HepG2 (cell line): ENCODE measurements at regions of chr9 and their contacts with region 1.

Region 1: DNA sequence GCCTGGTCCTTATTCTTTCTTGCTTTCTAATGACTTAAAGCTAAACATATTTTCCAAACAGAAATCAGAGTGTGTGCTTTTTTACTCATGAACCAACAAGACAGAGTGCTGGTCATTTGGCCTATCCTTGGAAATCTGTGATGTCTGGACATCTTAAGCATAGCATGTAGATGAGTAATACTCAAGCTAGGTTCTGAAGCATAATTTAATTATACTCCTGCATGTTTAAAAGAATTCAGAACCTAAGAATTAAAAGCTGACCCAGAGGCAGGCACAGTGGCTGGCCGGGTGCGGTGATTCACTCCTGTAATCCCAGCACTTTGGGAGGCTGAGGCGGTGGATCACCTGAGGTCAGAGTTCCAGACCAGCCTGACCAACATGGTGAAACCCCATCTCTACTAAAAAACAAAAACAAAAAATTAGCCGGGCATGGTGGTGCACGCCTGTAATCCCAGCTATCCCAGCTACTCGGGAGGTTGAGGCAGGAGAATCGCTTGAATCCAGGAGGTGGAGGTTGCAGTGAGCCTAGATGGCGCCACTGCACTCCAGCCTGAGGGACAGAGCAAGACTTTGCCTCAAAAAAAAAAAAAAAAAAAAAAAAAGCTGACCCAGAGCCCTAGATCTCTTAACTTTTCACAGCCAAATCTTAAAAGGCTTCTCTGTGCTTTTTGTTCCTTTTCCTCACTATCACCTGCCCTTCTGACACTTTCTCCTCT is 16.2 kb upstream of the TJP2 start:
- DNase-seq: no peak
- ATAC-seq: no peak
- H3K4me3 ChIP-seq: no peak overlapping the region
- H3K27ac ChIP-seq: no peak overlapping the region
- H3K4me1 ChIP-seq: peaks cover 30% of the 10 kb centered on the region
- H3K27me3 ChIP-seq: no peaks in the 10 kb centered on the region
- CTCF ChIP-seq: peak; percentile 55
- EP300 ChIP-seq: no peak
- POLR2A ChIP-seq: no peak
- RAD21 ChIP-seq: no peak

Region 2: GRCh38 chr9:69097064-69097463 is 60.8 kb before region 1 on chr9:
- CTCF ChIA-PET with region 1: no interaction called
- POLR2A ChIA-PET with region 1: no interaction called
- in situ Hi-C with region 1: no loop called
- intact Hi-C with region 1: no loop called
- DNase-seq: no peak
- ATAC-seq: no peak
- H3K4me3 ChIP-seq: no peak overlapping the region
- H3K27ac ChIP-seq: no peak overlapping the region
- H3K4me1 ChIP-seq: peaks cover 25% of the 10 kb centered on the region
- H3K27me3 ChIP-seq: no peaks in the 10 kb centered on the region
- CTCF ChIP-seq: no peak
- EP300 ChIP-seq: no peak
- POLR2A ChIP-seq: no peak
- RAD21 ChIP-seq: no peak

Region 3: GRCh38 chr9:69131682-69132081 is 26.2 kb before region 1 on chr9:
- CTCF ChIA-PET with region 1: no interaction called
- POLR2A ChIA-PET with region 1: interaction called, 10 read pairs
- in situ Hi-C with region 1: no loop called
- intact Hi-C with region 1: no loop called
- DNase-seq: peak; percentile 93
- ATAC-seq: peak; percentile 97
- H3K4me3 ChIP-seq: peak overlapping the region in 1 of 3 experiments; percentile 45; a peak in 1 of 6 replicates
- H3K27ac ChIP-seq: peak overlapping the region; percentile 70
- H3K4me1 ChIP-seq: peaks cover 63% of the 10 kb centered on the region
- H3K27me3 ChIP-seq: no peaks in the 10 kb centered on the region
- CTCF ChIP-seq: no peak
- EP300 ChIP-seq: peak in 1 of 2 experiments; percentile 54; a peak in 2 of 4 replicates
- POLR2A ChIP-seq: peak in 1 of 2 experiments; percentile 27; a peak in 2 of 4 replicates
- RAD21 ChIP-seq: no peak

Region 4: GRCh38 chr9:69174616-69175463 is 16.9 kb after region 1 on chr9:
- CTCF ChIA-PET with region 1: no interaction called
- POLR2A ChIA-PET with region 1: interaction called, 15 read pairs
- in situ Hi-C with region 1: no loop called
- intact Hi-C with region 1: loop called (anchors 2 kb)
- DNase-seq: peak; percentile 48
- ATAC-seq: peak; percentile 40
- H3K4me3 ChIP-seq: peak overlapping the region; percentile 66 to 73 (median 67)
- H3K27ac ChIP-seq: peak overlapping the region; percentile 50
- H3K4me1 ChIP-seq: peaks cover 91% of the 10 kb centered on the region
- H3K27me3 ChIP-seq: no peaks in the 10 kb centered on the region
- CTCF ChIP-seq: no peak
- EP300 ChIP-seq: no peak
- POLR2A ChIP-seq: no peak; a peak in 2 of 4 replicates
- RAD21 ChIP-seq: no peak

Region 5: GRCh38 chr9:69186841-69187611 is 29.1 kb after region 1 on chr9:
- CTCF ChIA-PET with region 1: no interaction called
- POLR2A ChIA-PET with region 1: interaction called, 15 read pairs
- in situ Hi-C with region 1: no loop called
- intact Hi-C with region 1: loop called (anchors 2 kb)
- DNase-seq: no peak
- ATAC-seq: no peak
- H3K4me3 ChIP-seq: no peak overlapping the region; a peak in 1 of 6 replicates
- H3K27ac ChIP-seq: peak overlapping the region; percentile 82
- H3K4me1 ChIP-seq: peaks cover 99% of the 10 kb centered on the region
- H3K27me3 ChIP-seq: no peaks in the 10 kb centered on the region
- CTCF ChIP-seq: no peak
- EP300 ChIP-seq: no peak
- POLR2A ChIP-seq: no peak
- RAD21 ChIP-seq: no peak